ENCODE measurements at regions of chr16 and their contacts with region 1.

Region 1: GRCh38 chr16:75758215-75758614 is 31.9 kb upstream of the CPHXL start:
- DNase-seq: no peak
- H3K4me3 ChIP-seq: no peak overlapping the region
- H3K27ac ChIP-seq: no peak overlapping the region
- H3K4me1 ChIP-seq: no peaks in the 10 kb centered on the region
- H3K27me3 ChIP-seq: no peaks in the 10 kb centered on the region
- CTCF ChIP-seq: no peak
- POLR2A ChIP-seq: no peak

Region 2: DNA sequence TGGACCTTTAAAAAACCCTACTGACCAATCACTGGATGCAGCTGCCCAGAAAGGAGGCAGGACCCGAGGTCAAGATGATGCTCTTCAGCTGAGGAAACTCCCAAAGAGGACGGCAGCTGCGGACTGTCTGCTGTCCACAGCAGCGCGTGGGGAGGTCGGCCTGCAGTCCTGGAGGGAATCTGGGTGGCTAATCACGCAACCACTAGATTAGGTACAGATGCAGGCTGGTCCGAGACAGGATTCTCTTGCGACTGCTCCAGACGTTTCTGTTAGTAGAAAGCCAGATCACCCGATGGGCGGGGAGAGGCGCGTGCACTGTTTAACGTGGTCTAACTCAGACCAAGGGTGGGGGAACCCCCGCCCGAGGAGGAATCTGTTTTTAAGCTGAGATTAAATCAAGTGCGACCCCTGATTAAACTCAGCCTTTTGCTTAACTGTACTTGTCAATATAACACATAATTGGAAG is 560.0 kb before region 1 on chr16:
- intact Hi-C with region 1: loop called in 1 of 2 experiments (anchors 10 kb)
- DNase-seq: peak in 1 of 7 donors; percentile 52
- H3K4me3 ChIP-seq: no peak overlapping the region
- H3K27ac ChIP-seq: no peak overlapping the region
- H3K4me1 ChIP-seq: no peaks in the 10 kb centered on the region
- H3K27me3 ChIP-seq: peaks cover 8% of the 10 kb centered on the region
- CTCF ChIP-seq: no peak
- POLR2A ChIP-seq: no peak